Dorsolateral prefrontal cortex (tissue), 120 donors: ENCODE measurements at regions of chr7 and their contacts with region 1.

Region 1: GRCh38 chr7:26490650-26491624 is 199.3 kb downstream of the SNX10 start:
- DNase-seq: peak in 5 of 10 donors; percentile 11 to 50 (median 39)
- H3K4me3 ChIP-seq: no peak overlapping the region
- H3K27ac ChIP-seq: peak overlapping the region in 50 of 59 donors; percentile 1 to 82 (median 49)
- H3K27me3 ChIP-seq: no peaks in the 10 kb centered on the region
- CTCF ChIP-seq: no peak

Region 2: DNA sequence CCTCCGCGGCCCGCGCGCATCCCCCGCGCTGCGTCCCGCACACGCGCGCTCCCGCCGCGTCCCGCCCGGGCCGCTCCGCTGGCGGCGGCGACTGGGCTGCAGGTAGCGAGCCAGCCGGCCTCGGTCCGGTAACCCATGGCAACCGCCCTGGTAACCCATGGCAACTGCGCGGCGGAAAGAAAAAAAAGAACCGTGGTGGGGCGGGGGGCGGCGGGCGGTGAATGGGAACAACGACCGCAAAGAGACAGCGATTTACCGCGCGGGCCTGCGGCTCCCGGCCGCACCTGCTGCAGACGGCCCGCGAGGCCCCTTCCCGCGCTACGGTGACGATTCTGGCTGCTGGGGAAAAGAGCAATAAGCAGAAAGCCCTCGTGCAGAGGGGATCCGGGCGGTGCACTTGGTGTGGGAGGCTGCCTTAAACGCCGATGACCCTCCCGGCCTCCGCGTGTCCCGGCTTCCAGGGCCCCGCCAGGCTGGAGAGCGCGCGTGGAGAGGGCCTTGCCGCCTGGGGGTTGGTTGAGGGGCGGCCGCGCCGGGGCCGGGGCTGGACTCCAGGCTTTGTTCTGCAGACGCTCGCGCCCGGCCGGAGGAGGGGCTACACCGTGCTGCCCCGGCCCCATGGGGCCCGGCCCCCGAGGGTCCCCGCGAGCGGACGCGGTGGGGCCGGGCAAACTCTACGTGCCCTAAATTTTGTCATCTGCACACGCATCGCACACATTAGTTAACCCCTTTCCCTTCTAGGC is 114.6 kb before region 1 on chr7:
- intact Hi-C with region 1: loop called in 1 of 2 experiments (anchors 5 kb)
- DNase-seq: peak in 9 of 10 donors; percentile 33 to 86 (median 52)
- H3K4me3 ChIP-seq: peak overlapping the region; percentile 5 to 74 (median 58)
- H3K27ac ChIP-seq: peak overlapping the region in 54 of 59 donors; percentile 31 to 94 (median 81)
- H3K27me3 ChIP-seq: peaks cover 0 to 99% (median 43%) of the 10 kb centered on the region in 45 donors
- CTCF ChIP-seq: peak in 1 of 56 donors; percentile 7

Region 3: GRCh38 chr7:26398756-26399501 is 92.0 kb before region 1 on chr7:
- intact Hi-C with region 1: loop called in 1 of 2 experiments (anchors 1 kb)
- DNase-seq: peak in 8 of 10 donors; percentile 29 to 72 (median 44)
- H3K4me3 ChIP-seq: peak overlapping the region; percentile 45 to 79 (median 65)
- H3K27ac ChIP-seq: peak overlapping the region in 56 of 59 donors; percentile 17 to 96 (median 83)
- H3K27me3 ChIP-seq: peaks cover 0 to 52% (median 0%) of the 10 kb centered on the region in 45 donors
- CTCF ChIP-seq: peak in 3 of 56 donors; percentile 2 to 13 (median 11)